ENCODE measurements at regions of chr15 and their contacts with region 1.

Region 1: GRCh38 chr15:64681424-64682024 is 93.9 kb downstream of the RBPMS2 start:
- H3K4me3 ChIP-seq: no peak overlapping the region
- H3K27ac ChIP-seq: no peak overlapping the region
- H3K4me1 ChIP-seq: no peaks in the 10 kb centered on the region
- CTCF ChIP-seq: peak; percentile 85

Region 2: GRCh38 chr15:64426845-64427465 is 254.6 kb before region 1 on chr15:
- CTCF ChIA-PET with region 1: interaction called, 12 read pairs
- POLR2A ChIA-PET with region 1: no interaction called
- H3K4me3 ChIP-seq: no peak overlapping the region
- H3K27ac ChIP-seq: no peak overlapping the region
- H3K4me1 ChIP-seq: peaks cover 2% of the 10 kb centered on the region; the same call in 1 of the 2 replicates
- CTCF ChIP-seq: no peak; the same call in 1 of the 2 replicates

Region 3: DNA sequence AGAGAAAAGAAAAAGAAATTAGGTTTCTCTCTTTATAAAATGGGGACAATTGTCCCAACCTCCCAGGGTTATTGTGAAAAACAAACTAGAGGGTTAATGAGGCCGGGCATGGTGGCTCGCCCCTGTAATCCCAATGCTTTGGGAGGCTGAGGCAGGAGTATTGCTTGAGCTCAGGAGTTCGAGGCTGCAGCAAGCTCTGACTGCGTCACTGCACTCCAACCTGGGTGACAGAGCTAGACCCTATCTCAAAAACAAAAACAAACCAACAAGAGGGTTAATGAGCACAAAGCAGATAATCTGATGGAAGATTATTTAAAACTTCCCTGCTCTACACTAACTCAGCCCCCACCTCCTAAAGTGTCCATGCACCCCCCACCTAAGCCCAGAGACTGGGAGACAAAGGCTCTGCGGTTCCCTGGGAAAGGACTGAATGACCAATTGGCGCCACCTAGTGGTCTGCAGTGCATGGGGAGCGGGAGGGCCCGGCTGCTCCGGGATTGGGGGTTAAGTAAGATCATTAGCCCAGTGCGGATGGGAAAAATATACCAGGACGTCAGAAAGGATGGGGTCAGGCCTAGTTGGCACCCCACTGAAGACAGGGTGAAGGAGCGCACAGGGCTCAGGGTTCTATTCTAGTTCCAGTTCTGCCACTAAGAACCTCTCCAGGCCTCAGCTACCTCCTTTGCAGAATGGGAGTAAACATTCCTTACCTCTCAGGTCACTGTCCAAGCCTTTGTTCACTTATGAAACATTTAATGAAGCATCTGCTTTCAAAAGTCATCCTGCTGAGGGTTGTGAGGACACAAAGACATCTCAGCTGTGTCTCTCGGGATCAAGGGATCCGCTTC is 128.3 kb after region 1 on chr15:
- CTCF ChIA-PET with region 1: interaction called, 19 read pairs
- POLR2A ChIA-PET with region 1: no interaction called
- H3K4me3 ChIP-seq: no peak overlapping the region
- H3K27ac ChIP-seq: no peak overlapping the region
- H3K4me1 ChIP-seq: no peaks in the 10 kb centered on the region
- CTCF ChIP-seq: 0 out of 2 replicates have a peak, but pooled peaks have one; percentile 56

Measured in HEK293 (cell line).